WTC11 (cell line): ENCODE measurements at regions of chr3 and their contacts with region 1.

Region 1: DNA sequence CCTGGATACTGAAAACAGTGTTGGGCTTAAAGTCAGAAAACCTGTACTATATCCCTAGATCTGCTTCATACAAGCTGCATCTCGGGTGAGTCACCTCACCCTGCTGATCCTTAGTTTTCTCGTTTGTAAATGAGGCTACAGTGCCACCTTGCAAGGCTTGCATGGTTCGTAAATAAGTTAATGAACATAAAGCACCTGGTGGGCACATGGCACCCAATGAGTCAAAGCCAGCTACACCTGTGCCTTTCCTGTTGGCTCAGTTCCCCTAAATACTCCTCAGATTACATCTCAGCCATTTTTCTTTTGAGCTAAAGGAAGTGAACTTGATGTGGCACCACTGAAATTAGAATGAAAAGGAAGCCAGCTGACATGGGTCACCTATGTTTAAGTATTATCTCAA is 26.5 kb downstream of the RTP1 start:
- DNase-seq: no peak
- ATAC-seq: no peak
- H3K4me3 Mint-ChIP-seq: no peak overlapping the region
- H3K27ac Mint-ChIP-seq: no peak overlapping the region
- H3K4me1 Mint-ChIP-seq: peaks cover 15% of the 10 kb centered on the region
- H3K27me3 Mint-ChIP-seq: peaks cover 4% of the 10 kb centered on the region; the same call in 1 of the 2 replicates
- CTCF ChIP-seq: no peak

Region 2: GRCh38 chr3:187210545-187211327 is 13.1 kb before region 1 on chr3:
- CTCF ChIA-PET with region 1: interaction called, 25 read pairs
- POLR2A ChIA-PET with region 1: no interaction called
- DNase-seq: no peak
- ATAC-seq: peak; percentile 94
- H3K4me3 Mint-ChIP-seq: no peak overlapping the region
- H3K27ac Mint-ChIP-seq: peak overlapping the region; percentile 46
- H3K4me1 Mint-ChIP-seq: peaks cover 25% of the 10 kb centered on the region
- H3K27me3 Mint-ChIP-seq: peaks cover 16% of the 10 kb centered on the region
- CTCF ChIP-seq: no peak

Region 3: DNA sequence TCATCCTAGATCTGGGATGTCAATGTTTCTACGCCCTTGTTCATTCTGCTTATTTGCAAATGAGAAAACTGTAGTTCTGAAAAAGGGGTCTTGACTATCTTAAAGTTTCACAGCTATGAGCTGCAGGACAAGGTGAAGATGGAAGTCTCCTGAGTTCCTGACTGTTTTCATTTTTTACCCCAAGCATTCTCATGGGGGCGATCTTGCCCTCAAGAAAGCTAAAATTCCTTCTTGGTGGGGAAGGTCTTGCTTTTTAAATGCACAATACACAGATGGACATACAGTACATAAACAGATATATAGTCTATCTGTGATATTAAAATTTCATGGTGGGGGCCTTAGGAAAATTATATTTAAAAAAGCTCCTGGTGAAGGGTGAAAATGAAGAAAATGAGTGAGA is 35.4 kb after region 1 on chr3:
- CTCF ChIA-PET with region 1: interaction called, 13 read pairs
- POLR2A ChIA-PET with region 1: no interaction called
- DNase-seq: no peak
- ATAC-seq: 0 out of 2 replicates have a peak, but pooled peaks have one; percentile 26
- H3K4me3 Mint-ChIP-seq: no peak overlapping the region
- H3K27ac Mint-ChIP-seq: no peak overlapping the region
- H3K4me1 Mint-ChIP-seq: peaks cover 16% of the 10 kb centered on the region
- H3K27me3 Mint-ChIP-seq: no peaks in the 10 kb centered on the region
- CTCF ChIP-seq: no peak

Region 4: DNA sequence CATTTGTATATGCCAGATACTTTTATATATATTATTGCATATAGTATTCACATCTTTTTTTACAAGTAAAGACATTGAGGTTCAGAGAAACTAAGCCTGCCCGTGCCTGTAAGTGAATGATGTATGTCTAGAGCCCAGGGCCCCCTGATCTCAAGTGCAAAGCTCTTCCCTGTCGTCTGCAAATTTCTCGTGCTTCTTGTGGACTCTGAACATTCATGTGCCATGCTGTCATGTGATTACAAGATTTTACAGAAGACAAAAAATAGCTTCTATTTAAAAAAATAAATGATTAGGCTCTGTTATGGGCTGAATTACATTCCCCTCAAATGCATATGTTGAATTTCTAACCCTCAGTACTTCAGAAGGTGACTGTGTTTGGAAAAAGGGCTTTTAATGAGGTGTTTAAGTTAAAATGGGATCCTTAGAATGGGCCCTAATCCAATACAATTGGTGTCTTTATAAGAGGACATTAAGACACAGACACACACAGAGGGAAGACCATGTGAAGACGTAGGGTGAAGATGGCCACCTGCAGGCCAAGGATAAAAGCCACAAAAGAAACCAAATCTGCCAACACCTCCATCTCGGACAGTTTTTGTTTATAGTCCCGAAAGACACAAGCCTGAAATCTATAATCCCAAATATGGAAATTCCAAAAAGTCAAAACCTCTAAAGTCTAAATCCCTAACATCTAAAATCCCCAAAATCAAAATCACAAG is 71.7 kb after region 1 on chr3:
- CTCF ChIA-PET with region 1: interaction called, 52 read pairs
- POLR2A ChIA-PET with region 1: no interaction called
- DNase-seq: no peak
- ATAC-seq: peak; percentile 22
- H3K4me3 Mint-ChIP-seq: no peak overlapping the region
- H3K27ac Mint-ChIP-seq: no peak overlapping the region
- H3K4me1 Mint-ChIP-seq: peaks cover 43% of the 10 kb centered on the region
- H3K27me3 Mint-ChIP-seq: peaks cover 7% of the 10 kb centered on the region
- CTCF ChIP-seq: no peak

Region 5: DNA sequence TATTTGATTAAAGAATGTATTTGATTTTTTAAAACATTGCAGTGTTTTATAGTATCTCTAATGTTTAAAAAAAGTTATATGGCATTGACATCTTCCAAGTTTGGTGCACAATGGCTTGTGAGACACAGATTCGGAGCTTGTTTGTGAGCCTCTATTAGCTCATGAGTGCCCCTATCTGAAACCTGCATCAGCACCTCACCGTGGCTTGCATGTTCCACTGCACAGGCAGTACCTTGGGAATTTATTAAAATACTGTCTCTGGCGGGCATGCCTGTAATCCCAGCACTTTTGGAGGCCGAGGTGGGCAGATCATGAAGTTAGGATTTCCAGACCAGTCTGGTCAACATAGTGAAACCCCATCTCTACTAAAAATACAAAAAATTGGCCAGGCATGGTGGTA is 485.4 kb after region 1 on chr3:
- CTCF ChIA-PET with region 1: interaction called, 12 read pairs
- POLR2A ChIA-PET with region 1: no interaction called
- DNase-seq: peak; percentile 26
- ATAC-seq: peak; percentile 88
- H3K4me3 Mint-ChIP-seq: no peak overlapping the region
- H3K27ac Mint-ChIP-seq: no peak overlapping the region
- H3K4me1 Mint-ChIP-seq: peaks cover 2% of the 10 kb centered on the region; the same call in 1 of the 2 replicates
- H3K27me3 Mint-ChIP-seq: no peaks in the 10 kb centered on the region
- CTCF ChIP-seq: no peak